Heart right ventricle (tissue), 16 donors: ENCODE measurements at regions of chr6 and their contacts with region 1.

Region 1: GRCh38 chr6:118787724-118788423 is 106.1 kb upstream of the ASF1A start:
- DNase-seq: peak in 1 of 2 donors; percentile 33
- ATAC-seq: peak; percentile 41 to 86 (median 71)
- H3K4me3 ChIP-seq: no peak overlapping the region
- H3K27ac ChIP-seq: peak overlapping the region in 1 of 10 donors; percentile 16
- H3K4me1 ChIP-seq: peaks cover 0 to 27% (median 16%) of the 10 kb centered on the region in 9 donors
- H3K27me3 ChIP-seq: no peaks in the 10 kb centered on the region
- CTCF ChIP-seq: no peak

Region 2: DNA sequence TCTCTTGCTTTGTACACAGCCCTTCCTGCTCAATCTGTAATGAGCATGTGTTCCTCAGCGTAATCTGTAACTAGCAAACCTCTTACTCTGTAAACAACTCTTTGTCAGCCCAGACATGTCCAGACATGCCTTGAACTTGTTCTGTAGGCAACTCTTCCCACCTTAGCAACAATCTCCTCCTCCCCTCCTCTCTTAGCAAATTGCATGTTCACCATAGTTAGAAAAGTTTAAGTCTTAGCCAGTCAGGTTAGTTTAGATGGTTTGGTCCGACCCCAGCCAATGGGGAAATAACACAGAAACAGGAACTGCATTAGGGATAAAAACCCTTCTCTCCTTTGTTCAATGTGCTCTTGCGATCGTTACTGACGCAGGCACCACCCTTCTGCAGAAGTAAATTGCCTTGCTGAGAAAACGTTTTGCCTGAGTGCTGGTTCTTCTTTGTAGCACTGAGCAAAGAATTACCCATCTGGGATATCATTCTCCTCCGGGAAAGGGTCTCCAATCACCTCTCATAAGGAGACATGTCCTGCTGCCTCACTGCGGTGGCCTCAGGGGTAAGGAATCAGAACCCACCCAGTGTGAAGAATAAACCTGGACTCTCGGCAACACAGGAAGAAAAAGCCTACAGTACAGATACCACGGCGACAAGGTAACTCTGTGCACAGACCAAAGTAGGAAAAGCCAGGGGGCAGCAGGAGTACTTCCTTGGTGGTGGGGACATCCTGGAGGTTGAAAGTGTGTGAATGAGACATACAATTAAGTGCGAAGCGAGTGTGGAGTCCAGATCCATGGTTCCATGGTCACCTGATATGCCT is 213.6 kb before region 1 on chr6:
- intact Hi-C with region 1: loop called in 1 of 10 experiments (anchors 10 kb)
- DNase-seq: no peak
- ATAC-seq: no peak
- H3K4me3 ChIP-seq: no peak overlapping the region
- H3K27ac ChIP-seq: no peak overlapping the region
- H3K4me1 ChIP-seq: no peaks in the 10 kb centered on the region
- H3K27me3 ChIP-seq: no peaks in the 10 kb centered on the region
- CTCF ChIP-seq: no peak